Endothelial cell of umbilical vein (primary cell): ENCODE measurements at regions of chr14 and their contacts with region 1.

Region 1: GRCh38 chr14:52755607-52756253 is 25.8 kb downstream of the STYX start:
- DNase-seq: no peak
- H3K4me3 ChIP-seq: no peak overlapping the region
- H3K27ac ChIP-seq: no peak overlapping the region
- H3K4me1 ChIP-seq: no peaks in the 10 kb centered on the region
- H3K27me3 ChIP-seq: no peaks in the 10 kb centered on the region
- CTCF ChIP-seq: no peak
- POLR2A ChIP-seq: no peak

Region 2: DNA sequence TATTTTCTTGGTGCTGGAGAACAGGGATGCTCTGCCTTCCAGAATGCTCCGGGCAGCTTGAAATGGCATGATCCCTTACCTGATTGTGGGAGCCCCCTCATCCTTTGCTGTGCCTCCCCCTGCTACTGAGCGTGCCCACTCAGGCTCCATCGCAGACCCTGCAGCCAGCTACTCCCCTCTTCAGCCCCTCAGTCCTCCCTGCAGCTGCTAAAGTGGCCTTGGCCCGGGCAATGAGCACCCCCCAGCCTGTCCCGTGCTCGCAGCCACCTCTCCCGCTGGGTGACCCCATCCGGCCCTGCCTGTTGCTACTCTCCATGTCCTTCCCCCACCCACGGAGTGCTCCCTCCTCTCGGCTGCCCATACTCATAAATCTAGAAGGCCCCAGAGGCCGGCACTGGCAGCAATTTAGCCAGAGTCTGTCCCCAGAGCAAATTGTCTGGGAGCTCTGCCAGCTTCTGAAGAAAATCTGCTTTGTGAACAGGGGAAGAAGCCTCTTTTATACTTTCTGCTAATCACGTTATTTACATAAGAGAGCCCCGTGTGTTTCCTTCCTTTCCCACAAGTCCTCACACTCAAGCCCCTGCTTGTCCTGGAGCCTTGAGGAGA is 1247.7 kb before region 1 on chr14:
- CTCF ChIA-PET with region 1: no interaction called
- POLR2A ChIA-PET with region 1: no interaction called
- dilution Hi-C with region 1: no loop called
- intact Hi-C with region 1: no loop called
- DNase-seq: peak; percentile 78
- H3K4me3 ChIP-seq: no peak overlapping the region
- H3K27ac ChIP-seq: no peak overlapping the region
- H3K4me1 ChIP-seq: peaks cover 5% of the 10 kb centered on the region
- H3K27me3 ChIP-seq: no peaks in the 10 kb centered on the region
- CTCF ChIP-seq: no peak
- POLR2A ChIP-seq: no peak

Region 3: GRCh38 chr14:52977798-52978197 is 222.1 kb after region 1 on chr14:
- CTCF ChIA-PET with region 1: no interaction called
- POLR2A ChIA-PET with region 1: no interaction called
- dilution Hi-C with region 1: no loop called
- intact Hi-C with region 1: no loop called
- DNase-seq: peak; percentile 16
- H3K4me3 ChIP-seq: no peak overlapping the region
- H3K27ac ChIP-seq: no peak overlapping the region
- H3K4me1 ChIP-seq: no peaks in the 10 kb centered on the region
- H3K27me3 ChIP-seq: peaks cover 0 to 2% of the 10 kb centered on the region in 2 experiments
- CTCF ChIP-seq: no peak
- POLR2A ChIP-seq: no peak

Region 4: DNA sequence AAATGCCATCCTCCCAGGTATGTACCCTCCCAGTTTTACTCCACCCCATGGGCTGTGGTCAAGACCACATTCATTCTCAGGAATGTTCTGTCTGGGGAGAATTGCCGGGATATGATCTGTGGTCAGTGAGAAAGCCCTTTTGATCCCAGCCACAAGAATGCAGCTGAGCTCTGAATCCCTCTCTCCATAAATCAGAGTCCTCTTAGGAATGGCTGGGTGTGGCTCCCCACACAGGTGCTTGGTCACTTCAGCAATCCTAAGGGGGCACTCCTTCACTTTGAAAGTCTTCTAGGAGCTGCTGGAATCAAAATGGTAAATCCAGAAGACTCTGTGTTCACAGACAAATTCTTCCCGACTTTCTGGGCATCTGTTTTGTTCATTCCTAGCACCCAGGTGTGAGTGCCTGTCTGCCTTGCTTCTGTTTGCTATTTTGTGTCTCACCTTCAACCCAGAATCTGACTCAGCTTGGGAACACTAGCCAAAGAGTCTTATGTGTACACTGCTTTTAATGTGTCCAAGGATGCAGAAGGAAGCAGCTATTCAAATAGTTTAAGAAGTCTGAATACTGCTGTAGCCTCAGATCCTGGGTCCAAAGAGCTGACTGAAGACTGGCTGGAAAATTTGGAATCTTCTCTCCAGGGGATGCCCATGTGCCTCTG is 1496.5 kb after region 1 on chr14:
- CTCF ChIA-PET with region 1: no interaction called
- POLR2A ChIA-PET with region 1: interaction called, 10 read pairs
- dilution Hi-C with region 1: no loop called
- intact Hi-C with region 1: no loop called
- DNase-seq: no peak
- H3K4me3 ChIP-seq: no peak overlapping the region
- H3K27ac ChIP-seq: no peak overlapping the region
- H3K4me1 ChIP-seq: peaks cover 5% of the 10 kb centered on the region
- H3K27me3 ChIP-seq: no peaks in the 10 kb centered on the region
- CTCF ChIP-seq: no peak
- POLR2A ChIP-seq: no peak